ENCODE measurements at regions of chr9 and their contacts with region 1.

Region 1: GRCh38 chr9:21919377-21920362 is 74.5 kb downstream of the CDKN2A start:
- DNase-seq: peak in 7 of 9 experiments; percentile 4 to 81 (median 30)
- ATAC-seq: peak; percentile 81
- H3K4me3 ChIP-seq: no peak overlapping the region
- H3K4me3 Mint-ChIP-seq: peak overlapping the region; percentile 24
- H3K27ac ChIP-seq: peak overlapping the region in 1 of 2 experiments; percentile 60
- H3K27ac Mint-ChIP-seq: peak overlapping the region; percentile 75
- H3K4me1 ChIP-seq: peaks cover 10% of the 10 kb centered on the region
- H3K4me1 Mint-ChIP-seq: peaks cover 19% of the 10 kb centered on the region
- H3K27me3 ChIP-seq: no peaks in the 10 kb centered on the region
- H3K27me3 Mint-ChIP-seq: no peaks in the 10 kb centered on the region
- CTCF ChIP-seq: no peak

Region 2: DNA sequence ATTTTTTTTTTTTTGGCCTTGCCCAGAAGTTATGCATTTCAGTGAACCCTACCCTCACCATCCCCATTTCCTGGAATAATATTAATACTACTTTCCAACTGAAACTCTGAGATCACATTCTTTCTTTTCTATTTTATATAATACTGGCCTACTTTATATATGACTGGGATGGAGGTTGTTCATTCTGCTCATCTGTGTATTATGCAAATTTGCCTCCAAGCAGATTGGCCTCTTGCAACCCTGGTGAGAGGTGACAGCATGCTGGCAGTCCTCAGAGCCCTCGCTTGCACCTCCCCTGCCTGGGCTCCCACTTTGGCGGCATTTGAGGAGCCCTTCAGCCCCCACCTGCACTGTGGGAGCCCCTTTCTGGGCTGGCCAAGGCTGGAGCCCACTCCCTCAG is 39.2 kb after region 1 on chr9:
- CTCF ChIA-PET with region 1: no interaction called
- POLR2A ChIA-PET with region 1: no interaction called
- intact Hi-C with region 1: loop called (anchors 2 kb)
- DNase-seq: no peak
- ATAC-seq: no peak
- H3K4me3 ChIP-seq: no peak overlapping the region
- H3K4me3 Mint-ChIP-seq: no peak overlapping the region
- H3K27ac ChIP-seq: no peak overlapping the region
- H3K27ac Mint-ChIP-seq: no peak overlapping the region
- H3K4me1 ChIP-seq: no peaks in the 10 kb centered on the region
- H3K4me1 Mint-ChIP-seq: no peaks in the 10 kb centered on the region
- H3K27me3 ChIP-seq: peaks cover 7% of the 10 kb centered on the region in 2 experiments
- H3K27me3 Mint-ChIP-seq: peaks cover 37% of the 10 kb centered on the region
- CTCF ChIP-seq: no peak

Region 3: GRCh38 chr9:21965401-21965951 is 45.8 kb after region 1 on chr9:
- CTCF ChIA-PET with region 1: no interaction called
- POLR2A ChIA-PET with region 1: no interaction called
- intact Hi-C with region 1: loop called in 1 of 2 experiments (anchors 2 kb)
- DNase-seq: peak in 5 of 9 experiments; percentile 29 to 69 (median 36)
- ATAC-seq: peak; percentile 43
- H3K4me3 ChIP-seq: peak overlapping the region; percentile 30 to 33
- H3K4me3 Mint-ChIP-seq: peak overlapping the region; percentile 42
- H3K27ac ChIP-seq: no peak overlapping the region
- H3K27ac Mint-ChIP-seq: peak overlapping the region; percentile 37
- H3K4me1 ChIP-seq: peaks cover 9% of the 10 kb centered on the region
- H3K4me1 Mint-ChIP-seq: peaks cover 15% of the 10 kb centered on the region
- H3K27me3 ChIP-seq: peaks cover 59 to 69% of the 10 kb centered on the region in 2 experiments
- H3K27me3 Mint-ChIP-seq: peaks cover 89% of the 10 kb centered on the region
- CTCF ChIP-seq: no peak

Region 4: GRCh38 chr9:22008736-22009562 is 89.3 kb after region 1 on chr9 and contains the start of gene CDKN2B:
- CTCF ChIA-PET with region 1: no interaction called
- POLR2A ChIA-PET with region 1: no interaction called
- intact Hi-C with region 1: no loop called
- DNase-seq: peak; percentile 25 to 84 (median 59)
- ATAC-seq: peak; percentile 60
- H3K4me3 ChIP-seq: peak within 1 kb of the TSS; percentile 45 to 57
- H3K4me3 Mint-ChIP-seq: peak within 1 kb of the TSS; percentile 74
- H3K27ac ChIP-seq: no peak within 1 kb of the TSS
- H3K27ac Mint-ChIP-seq: no peak within 1 kb of the TSS
- H3K4me1 ChIP-seq: peaks cover 29% of the 10 kb centered on the region
- H3K4me1 Mint-ChIP-seq: peaks cover 20% of the 10 kb centered on the region
- H3K27me3 ChIP-seq: peaks cover 43 to 46% of the 10 kb centered on the region in 2 experiments
- H3K27me3 Mint-ChIP-seq: peaks cover 54% of the 10 kb centered on the region
- CTCF ChIP-seq: peak; percentile 69
- total RNA-seq, gene CDKN2B: not detected

Measured in CD8-positive, alpha-beta T cell (primary cell).